Breast epithelium (tissue), 4 donors: ENCODE measurements at regions of chr11 and their contacts with region 1.

Region 1: GRCh38 chr11:119460582-119460981 is 37.6 kb upstream of the THY1 start:
- DNase-seq: no peak
- H3K4me3 ChIP-seq: no peak overlapping the region
- H3K27ac ChIP-seq: peak overlapping the region in 1 of 2 donors; percentile 71
- H3K4me1 ChIP-seq: no peaks in the 10 kb centered on the region
- H3K27me3 ChIP-seq: no peaks in the 10 kb centered on the region
- CTCF ChIP-seq: no peak
- POLR2A ChIP-seq: no peak

Region 2: DNA sequence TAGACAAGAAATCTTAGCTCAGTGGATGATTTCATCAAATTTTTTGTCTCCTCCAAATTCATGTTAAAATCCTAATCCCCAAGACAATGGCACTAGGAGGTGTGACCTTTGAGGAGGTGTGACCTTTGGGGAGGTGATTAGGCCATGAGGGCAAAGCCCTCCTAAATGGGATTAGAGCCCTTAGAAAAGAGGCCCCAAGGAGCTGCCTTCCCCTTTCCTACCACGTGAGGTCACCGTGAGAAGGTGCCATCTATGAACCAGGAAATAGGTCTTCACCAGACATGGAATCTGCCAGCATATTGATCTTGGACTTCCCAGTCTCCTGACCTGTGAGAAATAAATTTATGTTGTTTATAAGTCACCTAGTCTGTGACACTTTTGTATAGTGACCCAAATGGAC is 538.6 kb after region 1 on chr11:
- intact Hi-C with region 1: loop called (anchors 5 kb)
- DNase-seq: no peak
- H3K4me3 ChIP-seq: no peak overlapping the region
- H3K27ac ChIP-seq: no peak overlapping the region
- H3K4me1 ChIP-seq: peaks cover 0 to 4% of the 10 kb centered on the region in 2 donors
- H3K27me3 ChIP-seq: no peaks in the 10 kb centered on the region
- CTCF ChIP-seq: no peak
- POLR2A ChIP-seq: no peak